ENCODE measurements at regions of chr18 and their contacts with region 1.

Region 1: GRCh38 chr18:32980896-32981295 is 208.1 kb upstream of the KLHL14 start:
- DNase-seq: no peak
- ATAC-seq: no peak
- H3K4me3 ChIP-seq: no peak overlapping the region
- H3K27ac ChIP-seq: no peak overlapping the region
- H3K4me1 ChIP-seq: no peaks in the 10 kb centered on the region
- H3K27me3 ChIP-seq: no peaks in the 10 kb centered on the region
- CTCF ChIP-seq: no peak

Region 2: DNA sequence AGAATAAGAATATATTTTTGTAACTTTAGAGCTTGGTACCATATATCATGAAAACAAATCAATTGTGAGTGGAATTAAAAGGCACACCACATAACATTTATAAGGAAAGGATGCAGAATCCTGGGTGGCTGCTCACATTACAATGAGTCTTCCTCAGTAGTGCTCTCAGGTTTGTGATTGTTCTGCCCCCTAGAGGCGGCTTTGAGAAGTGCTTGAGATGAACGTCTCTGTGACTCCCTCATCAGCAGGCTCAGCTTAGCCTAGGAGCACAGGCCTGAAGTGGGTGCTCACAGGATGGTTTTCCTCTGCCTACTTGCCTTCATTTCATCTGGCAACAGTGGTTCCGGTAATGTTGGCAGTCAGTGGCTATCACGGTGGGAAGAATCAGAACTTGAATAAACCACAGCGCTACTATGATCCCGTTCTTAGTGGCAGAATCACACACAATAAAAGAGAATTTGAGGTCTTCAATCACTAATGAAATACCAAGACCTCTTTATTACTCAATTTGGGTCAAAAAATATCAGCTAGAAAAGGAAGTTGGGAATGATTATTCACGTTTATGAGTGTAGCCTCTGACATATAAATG is 1258.4 kb before region 1 on chr18:
- intact Hi-C with region 1: no loop called
- DNase-seq: peak; percentile 50 to 81
- ATAC-seq: peak; percentile 79 to 88 (median 85)
- H3K4me3 ChIP-seq: no peak overlapping the region
- H3K27ac ChIP-seq: no peak overlapping the region
- H3K4me1 ChIP-seq: peaks cover 0 to 26% (median 12%) of the 10 kb centered on the region in 9 donors
- H3K27me3 ChIP-seq: peaks cover 0 to 38% (median 0%) of the 10 kb centered on the region in 7 donors
- CTCF ChIP-seq: peak; percentile 46 to 95 (median 89)

Region 3: DNA sequence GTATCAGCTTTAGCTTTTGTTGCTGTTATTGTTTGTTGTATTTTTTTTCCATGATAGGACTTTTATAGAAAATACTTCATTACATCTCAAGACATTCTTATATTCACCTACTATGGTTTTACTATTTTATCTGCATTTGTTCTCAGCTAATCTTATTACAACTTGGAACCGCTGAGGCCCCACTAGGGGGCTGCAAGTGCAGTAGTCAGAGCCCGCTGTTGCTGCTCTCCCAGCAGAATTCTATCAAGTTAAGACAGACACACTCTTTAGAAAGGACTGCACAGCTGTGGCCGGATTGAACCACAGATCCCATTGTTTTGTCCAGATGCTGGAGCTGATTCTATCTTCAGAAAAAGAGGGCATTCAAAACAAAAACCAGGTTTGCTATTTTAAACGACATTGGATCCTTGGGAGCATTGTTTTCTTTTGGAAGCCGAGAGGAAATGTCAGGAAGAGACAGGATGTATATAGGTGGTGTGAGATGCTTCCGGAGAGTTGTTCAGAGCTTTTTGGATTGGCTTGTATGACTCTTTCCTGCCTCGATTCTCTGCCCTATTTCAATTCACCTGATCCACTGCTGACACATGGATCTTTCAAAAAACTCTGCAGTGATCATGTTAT is 404.5 kb before region 1 on chr18:
- intact Hi-C with region 1: no loop called
- DNase-seq: no peak
- ATAC-seq: peak in 1 of 8 donors; percentile 35
- H3K4me3 ChIP-seq: no peak overlapping the region
- H3K27ac ChIP-seq: no peak overlapping the region
- H3K4me1 ChIP-seq: peaks cover 0 to 10% (median 0%) of the 10 kb centered on the region in 9 donors
- H3K27me3 ChIP-seq: peaks cover 0 to 15% (median 0%) of the 10 kb centered on the region in 7 donors
- CTCF ChIP-seq: peak in 6 of 9 donors; percentile 27 to 50 (median 35)

Region 4: DNA sequence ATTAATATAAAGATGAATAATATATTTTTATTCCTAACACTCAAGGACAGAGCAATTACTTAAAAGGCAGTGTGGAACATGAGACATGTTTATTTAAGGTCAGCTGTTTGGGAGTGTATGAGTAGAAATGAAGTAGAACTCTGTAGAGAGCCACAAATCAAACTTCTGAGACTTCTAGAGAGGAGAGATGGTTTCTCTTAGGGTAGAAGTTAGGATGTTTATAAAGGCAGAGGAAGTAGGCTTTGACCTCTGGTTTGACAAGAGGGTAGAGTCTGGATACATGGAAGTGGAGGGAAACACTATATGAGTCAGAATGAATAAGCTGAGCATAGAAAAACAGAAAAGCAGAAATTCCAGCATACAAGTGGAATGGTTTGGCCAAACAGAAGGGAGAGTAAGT is 54.0 kb after region 1 on chr18:
- intact Hi-C with region 1: loop called in 1 of 10 experiments (anchors 5 kb)
- DNase-seq: no peak
- ATAC-seq: no peak
- H3K4me3 ChIP-seq: no peak overlapping the region
- H3K27ac ChIP-seq: no peak overlapping the region
- H3K4me1 ChIP-seq: no peaks in the 10 kb centered on the region
- H3K27me3 ChIP-seq: no peaks in the 10 kb centered on the region
- CTCF ChIP-seq: no peak